ENCODE measurements at regions of chr16 and their contacts with region 1.

Region 1: GRCh38 chr16:77236063-77236511 is 36.9 kb downstream of the SYCE1L start:
- DNase-seq: peak; percentile 82
- H3K4me3 ChIP-seq: peak overlapping the region; percentile 21 to 47; a peak in 2 of 4 replicates
- H3K27ac ChIP-seq: no peak overlapping the region
- H3K4me1 ChIP-seq: no peaks in the 10 kb centered on the region; a peak in 1 of 4 replicates
- H3K27me3 ChIP-seq: no peaks in the 10 kb centered on the region
- CTCF ChIP-seq: peak; percentile 99
- EP300 ChIP-seq: no peak
- RAD21 ChIP-seq: peak; percentile 100

Region 2: GRCh38 chr16:77223184-77223583 is 12.9 kb before region 1 on chr16:
- CTCF ChIA-PET with region 1: interaction called, 10 read pairs
- POLR2A ChIA-PET with region 1: no interaction called
- DNase-seq: peak; percentile 35
- H3K4me3 ChIP-seq: no peak overlapping the region; a peak in 1 of 4 replicates
- H3K27ac ChIP-seq: no peak overlapping the region
- H3K4me1 ChIP-seq: no peaks in the 10 kb centered on the region
- H3K27me3 ChIP-seq: no peaks in the 10 kb centered on the region
- CTCF ChIP-seq: peak; percentile 53
- EP300 ChIP-seq: no peak
- RAD21 ChIP-seq: no peak

Region 3: GRCh38 chr16:77599793-77600415 is 363.8 kb after region 1 on chr16:
- CTCF ChIA-PET with region 1: interaction called, 317 read pairs
- POLR2A ChIA-PET with region 1: no interaction called
- DNase-seq: peak; percentile 30
- H3K4me3 ChIP-seq: peak overlapping the region in 1 of 2 experiments; percentile 41; a peak in 1 of 4 replicates
- H3K27ac ChIP-seq: no peak overlapping the region
- H3K4me1 ChIP-seq: no peaks in the 10 kb centered on the region
- H3K27me3 ChIP-seq: no peaks in the 10 kb centered on the region
- CTCF ChIP-seq: peak; percentile 85
- EP300 ChIP-seq: no peak
- RAD21 ChIP-seq: peak; percentile 65

Region 4: GRCh38 chr16:77696149-77696548 is 460.1 kb after region 1 on chr16:
- CTCF ChIA-PET with region 1: no interaction called
- POLR2A ChIA-PET with region 1: no interaction called
- DNase-seq: no peak
- H3K4me3 ChIP-seq: no peak overlapping the region
- H3K27ac ChIP-seq: no peak overlapping the region
- H3K4me1 ChIP-seq: no peaks in the 10 kb centered on the region
- H3K27me3 ChIP-seq: no peaks in the 10 kb centered on the region; the same call in 1 of the 2 replicates
- CTCF ChIP-seq: no peak
- EP300 ChIP-seq: no peak
- RAD21 ChIP-seq: no peak

Measured in SK-N-SH (cell line).